Caco-2 (cell line): ENCODE measurements at regions of chr2 and their contacts with region 1.

Region 1: GRCh38 chr2:207498427-207498826 is 31.3 kb upstream of the CREB1 start:
- DNase-seq: no peak
- H3K4me3 ChIP-seq: no peak overlapping the region
- H3K4me3 Mint-ChIP-seq: no peak overlapping the region
- H3K27ac Mint-ChIP-seq: no peak overlapping the region
- H3K4me1 ChIP-seq: 0 out of 2 replicates have a peak, but pooled peaks cover 5% of the 10 kb centered on the region
- H3K4me1 Mint-ChIP-seq: no peaks in the 10 kb centered on the region
- H3K27me3 ChIP-seq: no peaks in the 10 kb centered on the region
- H3K27me3 Mint-ChIP-seq: no peaks in the 10 kb centered on the region
- CTCF ChIP-seq: no peak

Region 2: GRCh38 chr2:207484444-207485391 is 13.7 kb before region 1 on chr2:
- CTCF ChIA-PET with region 1: no interaction called
- POLR2A ChIA-PET with region 1: no interaction called
- intact Hi-C with region 1: loop called (anchors 1 kb)
- DNase-seq: no peak
- H3K4me3 ChIP-seq: no peak overlapping the region
- H3K4me3 Mint-ChIP-seq: no peak overlapping the region
- H3K27ac Mint-ChIP-seq: no peak overlapping the region
- H3K4me1 ChIP-seq: peaks cover 10% of the 10 kb centered on the region
- H3K4me1 Mint-ChIP-seq: peaks cover 19% of the 10 kb centered on the region
- H3K27me3 ChIP-seq: no peaks in the 10 kb centered on the region
- H3K27me3 Mint-ChIP-seq: no peaks in the 10 kb centered on the region
- CTCF ChIP-seq: no peak